MCF 10A (cell line): ENCODE measurements at regions of chr6 and their contacts with region 1.

Region 1: GRCh38 chr6:139134817-139135581 is at the start of gene HECA:
- DNase-seq: peak; percentile 91
- H3K4me3 Mint-ChIP-seq: peak within 1 kb of the TSS; percentile 79
- H3K27ac Mint-ChIP-seq: peak within 1 kb of the TSS; percentile 65
- H3K4me1 Mint-ChIP-seq: peaks cover 15% of the 10 kb centered on the region
- H3K27me3 Mint-ChIP-seq: no peaks in the 10 kb centered on the region
- CTCF ChIP-seq: no peak
- total RNA-seq, gene HECA: 11.1 and 11.5 TPM in 2 replicates

Region 2: DNA sequence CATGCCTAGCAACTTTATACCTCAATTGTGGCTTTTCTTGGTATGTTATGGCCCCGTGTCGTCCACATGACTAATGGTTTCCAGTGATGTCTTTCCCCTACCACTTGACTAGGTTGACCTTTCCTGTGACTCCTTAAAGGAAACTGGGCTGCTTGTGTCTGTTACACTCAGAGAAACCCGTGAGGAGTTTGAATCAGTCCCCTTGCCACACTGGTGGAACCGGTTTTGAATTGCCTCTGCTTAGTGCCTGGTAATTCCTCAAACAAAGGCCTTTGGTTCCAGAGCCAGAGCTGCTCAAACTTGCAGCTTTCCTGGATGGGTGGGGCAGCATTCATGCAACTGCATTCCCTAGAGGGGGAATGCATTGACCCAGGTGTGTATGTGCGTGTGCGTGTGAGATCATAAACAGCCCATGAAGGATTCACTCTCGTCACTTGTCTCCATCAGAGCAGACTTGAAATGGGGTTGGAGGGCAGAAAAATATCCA is 317.1 kb before region 1 on chr6:
- CTCF ChIA-PET with region 1: no interaction called
- POLR2A ChIA-PET with region 1: no interaction called
- intact Hi-C with region 1: loop called (anchors 5 kb)
- DNase-seq: no peak
- H3K4me3 Mint-ChIP-seq: no peak overlapping the region
- H3K27ac Mint-ChIP-seq: no peak overlapping the region
- H3K4me1 Mint-ChIP-seq: peaks cover 10% of the 10 kb centered on the region
- H3K27me3 Mint-ChIP-seq: no peaks in the 10 kb centered on the region
- CTCF ChIP-seq: no peak

Region 3: DNA sequence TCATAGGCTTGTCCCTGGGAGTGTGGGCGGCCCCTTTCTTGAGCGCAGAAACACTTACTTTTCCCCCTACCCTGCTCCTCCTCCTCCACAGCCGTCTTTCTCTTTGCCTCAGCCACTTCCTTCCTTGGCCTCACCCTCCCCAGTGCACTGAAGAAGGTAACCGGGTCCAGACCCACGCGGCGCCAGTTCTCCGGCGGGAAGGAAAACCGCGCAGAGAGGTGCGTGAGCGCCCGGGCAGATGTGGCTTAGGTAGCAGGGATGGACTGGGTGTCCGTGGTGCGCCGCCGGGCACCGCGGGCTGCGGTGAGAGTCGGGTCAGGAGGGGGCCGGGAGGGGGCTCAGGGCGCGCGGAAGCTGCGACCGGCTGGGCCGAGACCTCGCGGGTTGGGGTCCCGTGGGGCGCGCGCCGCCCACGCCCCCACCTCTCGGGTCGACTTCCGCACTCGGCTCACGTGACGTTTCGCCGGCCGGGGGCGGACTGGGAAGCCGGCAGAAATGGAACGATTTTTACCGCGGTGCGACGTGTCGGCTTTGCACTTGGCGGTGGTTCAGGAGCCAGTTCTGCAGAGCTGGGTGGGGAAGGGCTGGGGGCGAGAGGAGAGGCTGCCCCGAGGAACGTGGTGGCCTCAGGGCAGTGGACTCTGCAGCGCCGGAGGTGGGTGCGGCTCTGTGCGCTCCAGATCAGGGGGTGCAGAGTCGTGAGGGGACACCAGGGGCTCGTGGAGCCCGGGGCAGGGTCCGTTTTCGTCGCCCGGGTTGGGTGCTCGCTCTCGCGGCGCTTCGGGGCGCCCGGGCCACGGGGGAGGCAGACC is 106.1 kb before region 1 on chr6 and contains the start of gene ABRACL:
- CTCF ChIA-PET with region 1: no interaction called
- POLR2A ChIA-PET with region 1: no interaction called
- intact Hi-C with region 1: loop called (anchors 1 kb)
- DNase-seq: peak; percentile 26
- H3K4me3 Mint-ChIP-seq: no peak within 1 kb of the TSS
- H3K27ac Mint-ChIP-seq: peak within 1 kb of the TSS; percentile 52
- H3K4me1 Mint-ChIP-seq: peaks cover 24% of the 10 kb centered on the region
- H3K27me3 Mint-ChIP-seq: no peaks in the 10 kb centered on the region
- CTCF ChIP-seq: no peak
- total RNA-seq, gene ABRACL: 24.0 and 36.8 TPM in 2 replicates